RWPE1 (cell line): ENCODE measurements at regions of chr6 and their contacts with region 1.

Region 1: GRCh38 chr6:42038163-42038562 is 12.2 kb upstream of the TAF8 start:
- DNase-seq: no peak
- H3K27ac ChIP-seq: no peak overlapping the region
- CTCF ChIP-seq: no peak

Region 2: DNA sequence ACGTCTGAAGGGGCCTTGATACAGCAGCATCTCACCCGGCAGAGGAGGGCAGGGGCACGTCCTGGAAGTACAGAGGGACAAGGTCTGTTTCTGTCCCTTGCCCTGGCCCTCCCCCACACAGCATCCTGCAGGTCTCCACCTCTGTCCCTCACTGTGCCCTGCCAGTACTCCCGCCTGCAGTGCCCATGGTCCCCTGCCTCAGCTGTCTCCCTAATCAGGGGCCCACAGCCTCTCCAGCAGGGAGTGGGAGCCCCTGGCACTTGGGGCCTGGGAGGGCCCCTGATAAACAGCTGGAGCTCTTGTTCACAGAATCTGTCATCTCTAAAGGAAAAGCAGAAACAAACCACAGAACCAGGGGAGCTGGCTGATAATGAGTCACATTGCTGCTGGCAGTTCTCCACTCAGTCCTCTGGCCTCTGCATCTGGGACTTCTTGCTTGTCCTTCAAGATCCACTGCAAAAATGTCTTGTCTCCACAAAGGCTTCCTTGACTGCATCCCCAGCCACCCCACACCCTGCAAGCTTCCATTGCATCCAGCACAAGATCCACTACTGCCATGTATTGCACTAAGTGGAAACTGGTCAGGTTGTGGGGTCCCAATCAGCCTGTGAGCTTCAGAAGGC is 21.0 kb before region 1 on chr6:
- CTCF ChIA-PET with region 1: no interaction called
- POLR2A ChIA-PET with region 1: interaction called, 10 read pairs
- DNase-seq: no peak
- H3K27ac ChIP-seq: peak overlapping the region; percentile 42
- CTCF ChIP-seq: no peak

Region 3: GRCh38 chr6:42050266-42051032 is 12.3 kb after region 1 on chr6 and contains the start of gene TAF8:
- CTCF ChIA-PET with region 1: no interaction called
- POLR2A ChIA-PET with region 1: no interaction called
- DNase-seq: peak; percentile 94
- H3K27ac ChIP-seq: peak within 1 kb of the TSS; percentile 98
- CTCF ChIP-seq: no peak

Region 4: DNA sequence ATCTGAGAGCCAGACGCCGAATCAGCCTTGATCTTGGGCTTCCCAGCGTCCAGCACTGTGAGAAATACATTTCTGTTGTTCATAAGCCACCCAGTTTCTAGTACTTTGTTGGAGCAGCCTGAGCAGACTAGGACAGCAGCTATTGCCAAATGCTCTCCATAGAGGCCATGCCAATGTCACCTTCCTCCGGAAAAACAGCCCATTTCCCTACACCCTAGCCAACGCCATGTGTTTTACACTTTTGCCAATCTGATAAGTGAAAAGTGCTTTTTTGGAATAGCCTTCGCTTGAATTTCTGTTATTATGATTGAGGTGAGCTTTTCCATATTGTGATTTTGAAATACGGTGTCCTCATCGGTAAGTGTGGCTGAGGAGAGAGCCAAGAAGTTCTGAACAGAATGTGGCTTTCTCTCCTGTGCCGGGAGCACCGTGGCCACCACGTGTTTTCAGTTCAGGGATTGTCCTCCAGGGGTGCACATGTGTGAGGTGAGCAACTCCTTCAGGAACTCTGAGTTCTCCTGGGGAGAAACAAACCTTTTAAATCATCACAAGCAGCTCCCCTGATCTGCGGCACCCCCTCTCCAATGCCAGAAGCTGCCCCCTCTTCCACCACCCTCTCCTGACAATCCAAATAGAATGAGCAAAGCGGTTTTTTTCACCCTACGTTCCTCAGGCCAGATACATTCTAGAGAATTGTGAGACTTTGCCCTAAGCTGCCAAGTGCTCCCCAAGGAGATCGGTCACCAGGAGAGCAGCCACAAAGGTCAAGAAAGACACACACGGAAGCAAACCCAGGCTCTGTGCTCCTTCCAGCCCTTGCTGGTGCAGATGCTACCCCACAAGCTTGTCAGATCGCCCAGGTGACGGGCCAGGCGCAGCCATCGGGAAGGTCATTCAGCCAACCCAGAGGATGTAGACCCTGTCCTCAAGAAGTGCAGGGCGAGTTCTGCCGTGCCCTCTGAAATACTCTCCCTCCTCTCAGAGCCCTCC is 48.2 kb after region 1 on chr6:
- CTCF ChIA-PET with region 1: no interaction called
- POLR2A ChIA-PET with region 1: no interaction called
- DNase-seq: no peak
- H3K27ac ChIP-seq: peak overlapping the region; percentile 47
- CTCF ChIP-seq: no peak

Region 5: GRCh38 chr6:42131531-42131930 is 93.4 kb after region 1 on chr6:
- CTCF ChIA-PET with region 1: no interaction called
- POLR2A ChIA-PET with region 1: no interaction called
- DNase-seq: no peak
- H3K27ac ChIP-seq: peak overlapping the region; percentile 4; the same call in 1 of the 2 replicates
- CTCF ChIP-seq: no peak